ENCODE measurements at regions of chr7 and their contacts with region 1.

Region 1: GRCh38 chr7:80060218-80060806 is 74.3 kb upstream of the GNAI1 start:
- DNase-seq: peak; percentile 65 to 82 (median 78)
- H3K4me3 ChIP-seq: no peak overlapping the region
- H3K27ac ChIP-seq: no peak overlapping the region
- H3K4me1 ChIP-seq: no peaks in the 10 kb centered on the region
- H3K27me3 ChIP-seq: no peaks in the 10 kb centered on the region

Region 2: DNA sequence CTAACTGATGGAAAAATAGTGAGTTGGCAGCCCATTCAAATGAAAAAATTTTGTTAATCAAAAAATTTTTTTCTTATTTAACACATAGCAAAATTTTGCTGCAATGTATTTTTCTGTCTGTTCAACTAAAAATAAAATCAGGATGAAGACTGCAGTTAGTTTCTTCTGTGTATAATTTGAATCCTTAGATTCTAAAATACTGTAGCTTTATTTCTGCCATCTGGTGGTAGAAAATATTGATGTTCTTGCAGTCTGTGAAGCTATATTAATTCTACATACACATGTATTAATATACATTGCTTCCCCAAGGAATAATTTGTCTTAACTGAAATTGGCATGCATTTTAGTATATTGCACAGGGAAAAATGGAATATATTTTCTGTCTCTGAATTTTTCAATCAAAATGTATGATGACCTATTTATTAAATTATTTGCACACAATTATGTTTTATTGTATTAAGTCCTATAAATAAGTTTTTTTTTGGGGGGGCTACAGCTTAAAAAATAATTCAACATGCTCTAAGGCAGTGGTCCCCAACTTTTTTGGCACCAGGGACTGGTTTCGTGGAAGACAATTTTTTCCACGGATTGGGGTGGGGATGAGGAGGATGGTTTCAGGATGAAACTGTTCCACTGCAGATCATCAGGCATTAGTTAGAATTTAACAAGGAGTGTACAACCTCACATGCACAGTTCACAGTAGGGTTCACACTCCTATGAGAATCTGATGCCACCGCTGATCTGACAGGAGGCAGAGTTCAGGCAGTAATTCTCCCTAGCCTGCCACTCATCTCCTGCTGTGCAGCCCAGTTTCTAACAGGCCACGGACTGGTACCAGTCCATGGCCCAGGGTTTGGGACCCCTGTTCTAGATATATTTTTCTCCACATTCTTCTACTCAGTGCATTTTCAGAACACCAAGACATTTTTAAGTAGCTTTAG is 332.2 kb after region 1 on chr7:
- CTCF ChIA-PET with region 1: interaction called, 32 read pairs
- POLR2A ChIA-PET with region 1: no interaction called
- DNase-seq: peak; percentile 45 to 68 (median 64)
- H3K4me3 ChIP-seq: no peak overlapping the region
- H3K27ac ChIP-seq: no peak overlapping the region
- H3K4me1 ChIP-seq: no peaks in the 10 kb centered on the region
- H3K27me3 ChIP-seq: no peaks in the 10 kb centered on the region

Region 3: GRCh38 chr7:80883188-80884025 is 823.1 kb after region 1 on chr7:
- CTCF ChIA-PET with region 1: no interaction called
- POLR2A ChIA-PET with region 1: no interaction called
- DNase-seq: peak in 1 of 3 donors; percentile 27
- H3K4me3 ChIP-seq: no peak overlapping the region
- H3K27ac ChIP-seq: no peak overlapping the region
- H3K4me1 ChIP-seq: no peaks in the 10 kb centered on the region
- H3K27me3 ChIP-seq: no peaks in the 10 kb centered on the region

Measured in common myeloid progenitor, CD34-positive (primary cell).